Tibial artery (tissue), 4 donors: ENCODE measurements at regions of chr6 and their contacts with region 1.

Region 1: DNA sequence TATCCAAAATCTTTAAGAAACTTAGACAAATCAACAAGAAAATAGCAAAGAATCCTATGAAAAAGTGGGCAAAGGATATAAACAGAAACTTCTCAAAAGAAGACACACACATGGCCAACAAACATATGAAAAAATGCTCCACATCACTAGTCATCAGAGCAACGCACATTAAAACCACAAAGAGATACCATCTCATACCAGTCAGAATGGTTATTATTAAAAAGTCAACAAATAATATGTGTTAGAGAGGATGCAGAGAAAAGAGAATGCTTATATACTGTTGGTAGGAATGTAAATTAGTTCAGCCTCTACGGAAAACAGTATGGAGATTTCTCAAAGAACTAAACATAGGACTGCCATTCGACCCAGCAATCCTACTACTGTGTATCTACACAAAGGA is 212.0 kb upstream of the DTNBP1 start:
- DNase-seq: no peak
- H3K4me3 ChIP-seq: no peak overlapping the region
- H3K27ac ChIP-seq: no peak overlapping the region
- H3K4me1 ChIP-seq: peaks cover 0 to 3% (median 0%) of the 10 kb centered on the region in 4 donors
- H3K27me3 ChIP-seq: no peaks in the 10 kb centered on the region
- CTCF ChIP-seq: no peak

Region 2: DNA sequence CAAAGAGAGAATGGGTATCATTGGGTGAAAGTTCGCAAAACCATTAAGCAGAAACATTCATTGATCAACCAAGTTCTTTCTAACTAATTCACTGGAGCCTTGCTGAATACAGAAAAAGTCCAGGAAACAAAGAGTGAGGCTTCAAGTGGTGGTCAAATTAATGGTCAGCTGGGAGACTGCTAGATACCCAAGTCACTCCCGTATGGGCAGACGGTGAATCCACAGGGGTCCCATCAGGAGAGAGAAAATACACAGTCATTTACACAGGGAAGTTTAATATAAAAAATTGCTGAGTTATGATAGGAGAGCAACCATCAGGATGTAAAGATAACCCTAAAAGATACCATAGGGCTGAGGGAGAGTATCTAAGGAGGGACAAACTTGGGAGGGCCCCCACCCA is 13.3 kb before region 1 on chr6:
- intact Hi-C with region 1: loop called (anchors 1 kb)
- DNase-seq: no peak
- H3K4me3 ChIP-seq: no peak overlapping the region
- H3K27ac ChIP-seq: no peak overlapping the region
- H3K4me1 ChIP-seq: no peaks in the 10 kb centered on the region
- H3K27me3 ChIP-seq: no peaks in the 10 kb centered on the region
- CTCF ChIP-seq: no peak